K562 (cell line): ENCODE measurements at regions of chr6 and their contacts with region 1.

Region 1: GRCh38 chr6:42879372-42880239 is at the start of gene RPL7L1:
- DNase-seq: peak; percentile 85 to 94 (median 88)
- ATAC-seq: peak; percentile 96
- H3K4me3 ChIP-seq: peak within 1 kb of the TSS; percentile 92
- H3K27ac ChIP-seq: peak within 1 kb of the TSS; percentile 99
- H3K4me1 ChIP-seq: peaks cover 0 to 20% of the 10 kb centered on the region in 2 experiments; a peak in 3 of 5 replicates
- H3K27me3 ChIP-seq: no peaks in the 10 kb centered on the region
- CTCF ChIP-seq: no peak; a peak in 2 of 6 replicates
- EP300 ChIP-seq: peak; percentile 43
- POLR2A ChIP-seq: peak; percentile 99
- RAD21 ChIP-seq: 0 out of 4 replicates have a peak, but pooled peaks of 1 of the 2 experiments have one; percentile 4
- polyA plus RNA-seq, gene RPL7L1: 164 to 176 TPM

Region 2: DNA sequence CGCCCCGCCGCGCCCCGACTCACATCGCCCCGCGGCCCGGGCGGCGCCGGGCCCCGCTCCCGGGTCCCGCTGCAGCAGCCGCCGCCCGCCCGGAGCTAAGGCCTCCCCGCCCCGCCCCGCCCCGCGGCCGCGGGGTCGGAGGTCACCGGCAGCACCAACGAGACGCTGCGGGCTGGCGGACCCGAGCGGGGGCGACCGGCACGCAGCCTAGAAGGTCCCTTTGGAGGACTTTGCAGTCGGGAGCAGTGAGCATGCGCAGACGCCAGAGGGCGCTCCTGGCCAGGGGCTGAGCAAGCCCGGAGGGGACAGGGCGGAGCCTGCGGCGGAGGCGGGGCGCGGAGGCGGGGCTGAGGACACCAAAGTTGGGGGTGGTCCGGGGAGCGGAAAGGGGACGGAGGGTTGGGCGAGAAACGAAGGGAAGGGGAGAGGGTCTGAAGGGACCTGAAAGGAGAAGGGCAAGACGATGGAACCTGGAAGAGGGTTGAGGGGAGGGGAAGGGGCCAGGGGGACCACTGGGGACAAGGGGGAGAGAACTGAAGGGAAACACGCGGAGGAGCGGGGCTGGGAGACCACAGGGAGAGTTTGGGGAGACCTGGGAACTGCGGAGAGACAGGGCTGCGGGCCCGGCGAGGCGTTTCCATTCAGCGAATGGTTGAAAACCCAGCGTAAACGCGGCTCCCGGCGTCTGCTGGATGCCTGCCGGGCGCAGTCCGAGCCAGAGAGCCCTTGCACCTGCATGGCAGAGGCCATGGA is 1099.6 kb before region 1 on chr6 and contains the start of gene FRS3:
- CTCF ChIA-PET with region 1: interaction called, 3 read pairs
- POLR2A ChIA-PET with region 1: interaction called, 5 read pairs
- in situ Hi-C with region 1: no loop called
- intact Hi-C with region 1: loop called (anchors 5 kb)
- DNase-seq: peak; percentile 98 to 99 (median 98)
- ATAC-seq: peak; percentile 94
- H3K4me3 ChIP-seq: peak within 1 kb of the TSS; percentile 69
- H3K27ac ChIP-seq: peak within 1 kb of the TSS; percentile 51; the same call in 2 of the 3 replicates
- H3K4me1 ChIP-seq: peaks cover 17 to 27% of the 10 kb centered on the region in 2 experiments
- H3K27me3 ChIP-seq: no peaks in the 10 kb centered on the region
- CTCF ChIP-seq: peak; percentile 94 to 99 (median 98)
- EP300 ChIP-seq: peak; percentile 44
- POLR2A ChIP-seq: no peak
- RAD21 ChIP-seq: peak; percentile 99
- polyA plus RNA-seq, gene FRS3: 0.03 to 0.06 TPM

Region 3: GRCh38 chr6:42547407-42548329 is 331.9 kb before region 1 on chr6:
- CTCF ChIA-PET with region 1: no interaction called
- POLR2A ChIA-PET with region 1: no interaction called
- in situ Hi-C with region 1: no loop called
- intact Hi-C with region 1: loop called (anchors 5 kb)
- DNase-seq: peak; percentile 83 to 93 (median 92)
- ATAC-seq: peak; percentile 100
- H3K4me3 ChIP-seq: peak overlapping the region; percentile 17
- H3K27ac ChIP-seq: no peak overlapping the region
- H3K4me1 ChIP-seq: peaks cover 5 to 12% of the 10 kb centered on the region in 2 experiments; a peak in 3 of 5 replicates
- H3K27me3 ChIP-seq: peaks cover 0 to 4% of the 10 kb centered on the region in 2 experiments; a peak in 1 of 5 replicates
- CTCF ChIP-seq: peak; percentile 95 to 99 (median 99)
- EP300 ChIP-seq: peak; percentile 46; the same call in 1 of the 2 replicates
- POLR2A ChIP-seq: no peak
- RAD21 ChIP-seq: peak; percentile 95 to 96

Region 4: GRCh38 chr6:42661540-42662153 is 218.0 kb before region 1 on chr6:
- CTCF ChIA-PET with region 1: interaction called, 25 read pairs
- POLR2A ChIA-PET with region 1: interaction called, 10 read pairs
- in situ Hi-C with region 1: loop called (anchors 5 kb)
- intact Hi-C with region 1: loop called (anchors 1 kb)
- DNase-seq: peak; percentile 68 to 84 (median 70)
- ATAC-seq: peak; percentile 97
- H3K4me3 ChIP-seq: no peak overlapping the region
- H3K27ac ChIP-seq: no peak overlapping the region
- H3K4me1 ChIP-seq: no peaks in the 10 kb centered on the region
- H3K27me3 ChIP-seq: no peaks in the 10 kb centered on the region
- CTCF ChIP-seq: peak; percentile 80 to 94 (median 89)
- EP300 ChIP-seq: 0 out of 2 replicates have a peak, but pooled peaks have one; percentile 7
- POLR2A ChIP-seq: no peak
- RAD21 ChIP-seq: peak; percentile 87 to 88

Region 5: GRCh38 chr6:42745707-42746462 is 133.7 kb before region 1 on chr6 and contains the start of gene TBCC:
- CTCF ChIA-PET with region 1: no interaction called
- POLR2A ChIA-PET with region 1: interaction called, 21 read pairs
- in situ Hi-C with region 1: no loop called
- intact Hi-C with region 1: loop called (anchors 1 kb)
- DNase-seq: peak; percentile 98 to 100 (median 98)
- ATAC-seq: peak; percentile 83
- H3K4me3 ChIP-seq: peak within 1 kb of the TSS; percentile 90
- H3K27ac ChIP-seq: peak within 1 kb of the TSS; percentile 92
- H3K4me1 ChIP-seq: peaks cover 13 to 29% of the 10 kb centered on the region in 2 experiments
- H3K27me3 ChIP-seq: no peaks in the 10 kb centered on the region
- CTCF ChIP-seq: no peak
- EP300 ChIP-seq: no peak
- POLR2A ChIP-seq: peak; percentile 98
- RAD21 ChIP-seq: no peak
- polyA plus RNA-seq, gene TBCC: 2.8 to 5.0 TPM

Region 6: GRCh38 chr6:42890311-42891198 is 10.9 kb after region 1 on chr6:
- CTCF ChIA-PET with region 1: no interaction called
- POLR2A ChIA-PET with region 1: interaction called, 34 read pairs
- in situ Hi-C with region 1: no loop called
- intact Hi-C with region 1: no loop called
- DNase-seq: peak in 2 of 4 experiments; percentile 24 to 25
- ATAC-seq: peak; percentile 63
- H3K4me3 ChIP-seq: no peak overlapping the region
- H3K27ac ChIP-seq: no peak overlapping the region
- H3K4me1 ChIP-seq: peaks cover 15 to 20% of the 10 kb centered on the region in 2 experiments
- H3K27me3 ChIP-seq: no peaks in the 10 kb centered on the region
- CTCF ChIP-seq: no peak
- EP300 ChIP-seq: no peak
- POLR2A ChIP-seq: peak; percentile 74
- RAD21 ChIP-seq: no peak